ENCODE measurements at regions of chr17 and their contacts with region 1.

Region 1: GRCh38 chr17:33750943-33751701 is 458.0 kb upstream of the ASIC2 start:
- DNase-seq: peak; percentile 51 to 74
- H3K4me3 ChIP-seq: no peak overlapping the region
- H3K4me3 Mint-ChIP-seq: no peak overlapping the region
- H3K27ac Mint-ChIP-seq: no peak overlapping the region
- H3K4me1 ChIP-seq: no peaks in the 10 kb centered on the region
- H3K4me1 Mint-ChIP-seq: no peaks in the 10 kb centered on the region
- H3K27me3 ChIP-seq: no peaks in the 10 kb centered on the region
- H3K27me3 Mint-ChIP-seq: peaks cover 31% of the 10 kb centered on the region
- CTCF ChIP-seq: peak; percentile 92 to 95

Region 2: GRCh38 chr17:33520426-33521330 is 230.4 kb before region 1 on chr17:
- CTCF ChIA-PET with region 1: interaction called, 4 read pairs
- POLR2A ChIA-PET with region 1: no interaction called
- intact Hi-C with region 1: loop called (anchors 2 kb)
- DNase-seq: peak; percentile 70 to 75
- H3K4me3 ChIP-seq: no peak overlapping the region
- H3K4me3 Mint-ChIP-seq: no peak overlapping the region
- H3K27ac Mint-ChIP-seq: no peak overlapping the region
- H3K4me1 ChIP-seq: no peaks in the 10 kb centered on the region
- H3K4me1 Mint-ChIP-seq: no peaks in the 10 kb centered on the region
- H3K27me3 ChIP-seq: no peaks in the 10 kb centered on the region; the same call in none of the 2 replicates
- H3K27me3 Mint-ChIP-seq: peaks cover 16% of the 10 kb centered on the region
- CTCF ChIP-seq: peak; percentile 85 to 89

Region 3: GRCh38 chr17:33696102-33696501 is 55.0 kb before region 1 on chr17:
- CTCF ChIA-PET with region 1: no interaction called
- POLR2A ChIA-PET with region 1: no interaction called
- intact Hi-C with region 1: no loop called
- DNase-seq: no peak
- H3K4me3 ChIP-seq: no peak overlapping the region
- H3K4me3 Mint-ChIP-seq: no peak overlapping the region
- H3K27ac Mint-ChIP-seq: no peak overlapping the region
- H3K4me1 ChIP-seq: no peaks in the 10 kb centered on the region
- H3K4me1 Mint-ChIP-seq: no peaks in the 10 kb centered on the region
- H3K27me3 ChIP-seq: no peaks in the 10 kb centered on the region
- H3K27me3 Mint-ChIP-seq: peaks cover 27% of the 10 kb centered on the region
- CTCF ChIP-seq: no peak

Region 4: GRCh38 chr17:33712120-33712519 is 39.0 kb before region 1 on chr17:
- CTCF ChIA-PET with region 1: no interaction called
- POLR2A ChIA-PET with region 1: no interaction called
- intact Hi-C with region 1: loop called (anchors 1 kb)
- DNase-seq: no peak
- H3K4me3 ChIP-seq: no peak overlapping the region
- H3K4me3 Mint-ChIP-seq: no peak overlapping the region
- H3K27ac Mint-ChIP-seq: no peak overlapping the region
- H3K4me1 ChIP-seq: no peaks in the 10 kb centered on the region
- H3K4me1 Mint-ChIP-seq: no peaks in the 10 kb centered on the region
- H3K27me3 ChIP-seq: no peaks in the 10 kb centered on the region; the same call in 1 of the 2 replicates
- H3K27me3 Mint-ChIP-seq: peaks cover 32% of the 10 kb centered on the region
- CTCF ChIP-seq: peak in 1 of 2 experiments; percentile 31

Region 5: DNA sequence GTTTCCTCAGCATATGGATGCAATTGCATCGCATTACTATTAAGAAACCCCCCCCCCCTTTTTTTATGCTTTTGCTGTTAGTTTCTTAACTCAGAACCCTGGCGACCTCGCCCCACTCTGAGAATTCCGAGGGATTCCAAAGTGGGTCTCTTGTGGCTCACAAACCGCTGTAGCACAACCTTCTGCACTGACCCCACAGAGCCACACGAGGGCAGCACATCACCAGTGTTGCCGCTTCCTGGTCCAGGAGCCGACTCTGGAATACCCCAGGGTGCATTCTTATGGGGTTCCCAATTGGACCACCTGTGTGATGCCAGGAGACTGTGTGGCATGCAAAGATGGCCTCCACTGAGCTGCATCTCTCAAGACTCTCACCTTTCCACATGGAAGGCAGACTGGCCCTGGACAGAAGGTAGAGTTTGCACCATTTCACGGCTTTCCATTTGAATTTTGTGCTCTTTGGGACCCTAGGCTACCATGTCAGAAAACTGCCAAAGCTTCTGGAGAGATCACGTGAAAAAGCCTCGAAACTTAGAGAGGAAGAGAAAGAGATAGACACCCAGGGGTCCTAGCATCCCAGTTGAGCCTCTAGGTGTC is 25.3 kb before region 1 on chr17:
- CTCF ChIA-PET with region 1: interaction called, 3 read pairs
- POLR2A ChIA-PET with region 1: no interaction called
- intact Hi-C with region 1: loop called (anchors 1 kb)
- DNase-seq: peak; percentile 48 to 63
- H3K4me3 ChIP-seq: no peak overlapping the region
- H3K4me3 Mint-ChIP-seq: no peak overlapping the region
- H3K27ac Mint-ChIP-seq: no peak overlapping the region
- H3K4me1 ChIP-seq: no peaks in the 10 kb centered on the region
- H3K4me1 Mint-ChIP-seq: no peaks in the 10 kb centered on the region
- H3K27me3 ChIP-seq: 0 out of 2 replicates have a peak, but pooled peaks cover 1% of the 10 kb centered on the region
- H3K27me3 Mint-ChIP-seq: peaks cover 27% of the 10 kb centered on the region
- CTCF ChIP-seq: peak; percentile 78 to 79

Measured in Caco-2 (cell line).